Activated CD4-positive, alpha-beta T cell treated with anti-CD3 and anti-CD28 coated beads, Interleukin-2, amount 10 ng/mL, durations not matched to agents 24 days and 14 days (primary cell): ENCODE measurements at regions of chr11 and their contacts with region 1.

Region 1: DNA sequence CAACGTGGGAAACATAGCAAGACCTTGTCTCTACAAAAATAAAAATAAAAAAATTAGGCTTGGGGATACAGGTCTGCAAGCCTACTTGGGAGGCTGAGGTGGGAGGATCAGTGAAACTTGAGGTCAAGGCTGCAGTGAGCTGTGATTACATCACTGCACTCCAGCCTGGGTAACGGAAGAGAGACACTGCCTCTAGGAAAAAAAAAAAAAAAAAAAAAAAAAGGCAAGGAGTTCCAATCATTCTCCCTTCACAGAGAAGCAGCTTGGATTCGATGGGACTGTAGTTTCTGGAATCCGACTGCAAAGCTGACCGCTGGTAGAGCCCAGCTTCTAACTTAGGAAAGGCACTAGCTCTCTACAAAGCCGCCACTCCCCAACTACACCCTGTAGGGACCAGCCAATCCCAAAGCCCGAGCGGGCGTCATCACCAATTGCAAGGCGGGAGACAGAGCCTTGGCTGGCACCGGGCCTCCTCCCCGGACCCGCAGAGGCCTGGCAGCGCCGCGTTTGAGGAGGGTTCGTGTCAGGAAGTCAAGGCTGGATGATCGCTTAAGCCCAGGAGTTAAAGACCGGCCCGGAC is 699 bp upstream of the DDB2 start:
- DNase-seq: peak; percentile 93
- H3K4me3 Mint-ChIP-seq: peak overlapping the region; percentile 99
- H3K27ac Mint-ChIP-seq: peak overlapping the region; percentile 100
- H3K4me1 Mint-ChIP-seq: peaks cover 37% of the 10 kb centered on the region
- H3K27me3 Mint-ChIP-seq: no peaks in the 10 kb centered on the region

Region 2: GRCh38 chr11:47186076-47186936 is 27.8 kb before region 1 on chr11 and contains the start of gene PACSIN3:
- intact Hi-C with region 1: loop called (anchors 1 kb)
- DNase-seq: peak; percentile 83
- H3K4me3 Mint-ChIP-seq: peak within 1 kb of the TSS; percentile 81
- H3K27ac Mint-ChIP-seq: peak within 1 kb of the TSS; percentile 76
- H3K4me1 Mint-ChIP-seq: peaks cover 5% of the 10 kb centered on the region
- H3K27me3 Mint-ChIP-seq: peaks cover 34% of the 10 kb centered on the region
- total RNA-seq, gene PACSIN3: 14.3 and 16.4 TPM in 2 replicates

Region 3: DNA sequence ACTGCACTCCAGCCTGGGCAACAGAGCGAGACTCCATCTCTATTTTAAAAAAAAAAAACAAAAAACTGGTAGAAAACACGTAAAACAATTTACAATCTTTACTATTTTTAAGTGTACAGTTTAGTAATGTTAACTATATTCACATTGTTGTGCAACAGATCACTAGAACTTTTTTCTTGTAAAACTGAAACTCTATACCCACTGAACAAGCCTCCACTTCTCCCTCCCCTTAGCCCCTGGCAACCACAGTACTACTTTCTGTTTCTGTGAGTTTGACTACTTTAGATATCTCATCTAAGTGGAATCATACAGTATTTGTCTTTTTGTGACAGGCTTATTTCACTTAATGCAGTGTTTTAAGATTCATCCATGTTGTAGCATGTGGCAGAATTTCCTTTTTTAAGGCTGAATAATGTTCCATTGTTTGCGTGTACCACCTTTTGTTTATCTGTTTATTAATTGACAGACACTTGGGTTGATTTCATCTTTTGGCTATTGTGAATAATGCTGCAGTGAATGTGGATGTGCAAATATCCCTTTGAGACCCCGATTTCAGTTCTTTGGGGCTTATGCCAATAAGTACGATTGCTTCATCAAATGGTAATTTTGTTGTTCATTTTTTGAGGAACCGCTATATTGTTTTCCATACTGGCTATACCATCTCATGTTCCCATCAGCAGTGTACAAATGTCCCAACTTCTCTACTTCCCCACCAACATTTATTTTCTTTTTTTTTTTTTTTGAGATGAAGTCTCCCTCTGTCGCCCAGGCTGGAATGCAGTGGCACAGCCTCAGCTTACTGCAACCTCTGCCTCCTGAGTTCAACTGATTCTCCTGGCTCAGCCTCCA is 11.7 kb after region 1 on chr11:
- intact Hi-C with region 1: loop called (anchors 1 kb)
- DNase-seq: peak; percentile 77
- H3K4me3 Mint-ChIP-seq: peak overlapping the region; percentile 64
- H3K27ac Mint-ChIP-seq: peak overlapping the region; percentile 86
- H3K4me1 Mint-ChIP-seq: peaks cover 27% of the 10 kb centered on the region
- H3K27me3 Mint-ChIP-seq: no peaks in the 10 kb centered on the region

Region 4: DNA sequence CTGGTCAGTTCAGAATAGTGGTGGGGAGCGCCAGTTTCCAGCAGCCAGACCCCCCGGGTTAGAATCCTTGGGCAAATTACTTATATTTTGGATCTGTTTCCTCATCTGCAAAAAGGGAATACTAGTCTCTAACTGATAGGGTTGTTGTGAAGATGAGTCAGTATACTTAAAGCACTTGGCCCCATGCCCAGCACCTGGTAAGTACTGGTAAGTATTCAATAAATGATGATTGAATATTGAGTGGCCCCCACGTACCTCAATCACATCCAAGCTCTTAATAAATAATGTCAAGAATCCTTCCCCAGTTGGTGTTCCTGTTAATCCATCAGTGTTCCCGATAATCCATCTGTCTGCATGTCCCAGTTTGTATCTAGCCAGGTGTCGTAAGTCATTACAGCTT is 22.4 kb after region 1 on chr11:
- intact Hi-C with region 1: no loop called
- DNase-seq: no peak
- H3K4me3 Mint-ChIP-seq: no peak overlapping the region
- H3K27ac Mint-ChIP-seq: peak overlapping the region; percentile 40
- H3K4me1 Mint-ChIP-seq: peaks cover 26% of the 10 kb centered on the region
- H3K27me3 Mint-ChIP-seq: no peaks in the 10 kb centered on the region

Region 5: GRCh38 chr11:47248664-47249377 is 34.7 kb after region 1 on chr11 and contains the start of gene ACP2:
- intact Hi-C with region 1: loop called (anchors 1 kb)
- DNase-seq: peak; percentile 96
- H3K4me3 Mint-ChIP-seq: peak within 1 kb of the TSS; percentile 98
- H3K27ac Mint-ChIP-seq: peak within 1 kb of the TSS; percentile 98
- H3K4me1 Mint-ChIP-seq: peaks cover 14% of the 10 kb centered on the region
- H3K27me3 Mint-ChIP-seq: no peaks in the 10 kb centered on the region
- total RNA-seq, gene ACP2: 24.8 and 27.6 TPM in 2 replicates